Stomach (tissue), 19 donors: ENCODE measurements at regions of chr6 and their contacts with region 1.

Region 1: GRCh38 chr6:7589949-7590917 is at the start of gene SNRNP48:
- DNase-seq: peak; percentile 96 to 98
- H3K4me3 ChIP-seq: peak within 1 kb of the TSS; percentile 89 to 99 (median 90)
- H3K27ac ChIP-seq: peak within 1 kb of the TSS; percentile 63 to 86 (median 77)
- H3K4me1 ChIP-seq: peaks cover 20 to 64% (median 39%) of the 10 kb centered on the region in 4 donors
- H3K27me3 ChIP-seq: no peaks in the 10 kb centered on the region
- CTCF ChIP-seq: peak in 1 of 7 experiments; percentile 19
- EP300 ChIP-seq: no peak
- POLR2A ChIP-seq: peak in 2 of 4 donors; percentile 38 to 68
- total RNA-seq, gene SNRNP48: 12.6 to 138 (median 16.8) TPM

Region 2: GRCh38 chr6:7389451-7390225 is 200.6 kb before region 1 on chr6 and contains the starts of genes CAGE1 and RIOK1:
- intact Hi-C with region 1: loop called (anchors 10 kb)
- DNase-seq: peak; percentile 96 to 98
- H3K4me3 ChIP-seq: peak within 1 kb of the TSS; percentile 72 to 91 (median 84)
- H3K27ac ChIP-seq: peak within 1 kb of the TSS; percentile 87 to 95 (median 93)
- H3K4me1 ChIP-seq: peaks cover 19 to 37% (median 28%) of the 10 kb centered on the region in 4 donors
- H3K27me3 ChIP-seq: no peaks in the 10 kb centered on the region
- CTCF ChIP-seq: peak in 1 of 7 experiments; percentile 8
- EP300 ChIP-seq: no peak
- POLR2A ChIP-seq: peak in 1 of 4 donors; percentile 27
- total RNA-seq, gene CAGE1: not detected
- total RNA-seq, gene RIOK1: 8.7 to 105 (median 16.5) TPM